ENCODE measurements at regions of chr11 and their contacts with region 1.

Region 1: DNA sequence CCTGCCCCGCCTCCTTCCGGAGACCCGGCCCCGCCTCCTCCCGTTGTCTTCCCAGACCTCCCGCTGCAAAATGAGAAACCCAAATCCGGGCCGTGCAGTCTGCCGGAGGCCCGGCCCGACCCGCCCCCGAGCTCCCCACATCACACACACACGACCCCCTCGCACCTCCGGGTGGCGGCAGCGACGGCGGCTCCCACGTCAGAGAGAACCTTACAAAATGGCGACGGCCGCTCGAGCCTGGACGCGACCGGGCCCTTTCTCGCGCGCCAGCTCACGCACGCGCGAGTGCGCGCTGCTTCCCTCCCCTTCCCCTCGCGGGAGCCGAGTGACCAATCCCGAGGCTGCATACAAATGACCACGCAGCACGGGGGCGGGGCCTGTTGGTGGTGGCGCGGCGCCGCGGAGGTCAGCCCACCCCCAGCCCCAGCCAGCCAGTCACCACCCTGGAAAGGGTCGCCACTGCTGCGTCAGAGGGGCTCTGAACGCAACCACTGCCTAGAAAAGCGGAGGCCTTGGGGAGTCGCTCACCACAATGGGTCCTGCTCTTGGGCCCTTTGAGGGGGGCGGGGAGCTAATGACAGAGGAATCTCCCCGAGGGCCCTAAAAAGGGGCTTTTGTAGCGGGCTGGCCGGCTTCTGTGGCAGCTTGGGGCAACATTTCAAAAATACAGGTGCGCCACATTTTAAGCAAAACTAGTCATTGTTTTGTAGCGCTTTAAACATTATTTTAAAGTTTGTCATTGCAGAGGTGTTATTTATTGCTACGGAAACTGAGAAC is at the start of gene RBM4B:
- DNase-seq: peak; percentile 97 to 98
- ATAC-seq: peak; percentile 98 to 99 (median 99)
- H3K4me3 ChIP-seq: peak within 1 kb of the TSS; percentile 52 to 94 (median 72)
- H3K27ac ChIP-seq: peak within 1 kb of the TSS; percentile 86 to 98 (median 92)
- H3K4me1 ChIP-seq: peaks cover 7 to 55% (median 38%) of the 10 kb centered on the region in 9 donors
- H3K27me3 ChIP-seq: no peaks in the 10 kb centered on the region
- CTCF ChIP-seq: no peak
- total RNA-seq, gene RBM4B: 5.7 to 12.6 (median 9.2) TPM

Region 2: DNA sequence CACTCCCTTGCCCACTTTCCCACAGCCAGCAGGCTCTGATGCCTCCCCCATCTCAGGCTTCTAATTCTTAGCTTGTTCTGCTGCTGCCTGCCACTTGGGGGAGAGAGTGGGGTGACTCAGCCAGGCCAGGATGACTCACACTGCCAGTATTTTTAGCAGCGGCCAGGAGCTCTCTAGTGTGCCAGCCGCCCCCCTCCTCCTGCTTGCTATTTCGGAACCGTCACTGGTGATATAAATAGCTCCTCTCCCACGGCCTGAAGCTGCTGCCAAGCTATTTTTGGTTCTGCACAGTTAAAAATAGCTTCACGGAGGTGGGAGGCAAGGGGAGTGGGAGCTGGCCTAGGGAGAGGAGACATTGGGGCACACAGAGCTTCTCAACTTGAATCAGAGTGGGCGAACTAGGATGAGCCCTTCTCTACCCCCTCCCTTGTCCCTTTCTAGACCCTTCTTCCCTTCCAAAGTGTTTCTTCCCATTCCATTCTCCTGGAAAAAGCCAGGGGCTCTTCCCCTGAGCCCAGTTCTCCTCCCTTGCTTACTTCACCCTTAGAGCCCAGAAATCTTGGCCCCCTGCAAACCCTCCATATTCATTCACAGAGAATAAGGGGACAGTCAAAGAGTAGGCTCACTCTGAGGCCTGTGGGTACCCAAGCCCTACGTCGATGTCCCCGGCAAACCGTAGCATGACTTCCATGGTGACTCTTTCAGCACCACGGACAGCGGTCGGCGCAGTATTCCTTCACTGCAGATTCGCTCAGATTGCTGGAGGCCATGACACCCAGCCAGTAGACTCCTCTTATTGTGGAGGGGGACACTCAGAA is 259.4 kb before region 1 on chr11:
- intact Hi-C with region 1: loop called in 3 of 10 experiments (anchors 5 to 10 kb)
- DNase-seq: peak; percentile 71 to 85
- ATAC-seq: peak; percentile 78 to 97 (median 93)
- H3K4me3 ChIP-seq: no peak overlapping the region
- H3K27ac ChIP-seq: peak overlapping the region in 2 of 10 donors; percentile 43 to 55
- H3K4me1 ChIP-seq: peaks cover 0 to 52% (median 30%) of the 10 kb centered on the region in 9 donors
- H3K27me3 ChIP-seq: peaks cover 0 to 46% (median 10%) of the 10 kb centered on the region in 7 donors
- CTCF ChIP-seq: peak in 7 of 9 donors; percentile 21 to 56 (median 38)

Region 3: GRCh38 chr11:66579017-66579606 is 98.7 kb before region 1 on chr11:
- intact Hi-C with region 1: loop called (anchors 1 to 5 kb)
- DNase-seq: peak; percentile 82 to 85
- ATAC-seq: peak; percentile 88 to 94 (median 92)
- H3K4me3 ChIP-seq: no peak overlapping the region
- H3K27ac ChIP-seq: no peak overlapping the region
- H3K4me1 ChIP-seq: peaks cover 0 to 8% (median 6%) of the 10 kb centered on the region in 9 donors
- H3K27me3 ChIP-seq: no peaks in the 10 kb centered on the region
- CTCF ChIP-seq: peak; percentile 70 to 88 (median 85)

Region 4: GRCh38 chr11:66592457-66593302 is 85.1 kb before region 1 on chr11 and contains the starts of genes CCDC87 and CCS:
- intact Hi-C with region 1: loop called in 1 of 10 experiments (anchors 5 kb)
- DNase-seq: peak; percentile 98 to 99
- ATAC-seq: peak; percentile 97 to 99 (median 98)
- H3K4me3 ChIP-seq: peak within 1 kb of the TSS; percentile 36 to 85 (median 66)
- H3K27ac ChIP-seq: peak within 1 kb of the TSS in 9 of 10 donors; percentile 68 to 93 (median 84)
- H3K4me1 ChIP-seq: peaks cover 3 to 43% (median 32%) of the 10 kb centered on the region in 9 donors
- H3K27me3 ChIP-seq: no peaks in the 10 kb centered on the region
- CTCF ChIP-seq: peak; percentile 37 to 91 (median 69)
- total RNA-seq, gene CCDC87: 0.17 to 0.66 (median 0.37) TPM
- total RNA-seq, gene CCS: 15.9 to 29.3 (median 20.2) TPM

Region 5: GRCh38 chr11:66616379-66617154 is 61.2 kb before region 1 on chr11 and contains the start of gene RBM14:
- intact Hi-C with region 1: loop called in 2 of 10 experiments (anchors 1 to 5 kb)
- DNase-seq: peak; percentile 99
- ATAC-seq: peak; percentile 94 to 98 (median 97)
- H3K4me3 ChIP-seq: peak within 1 kb of the TSS; percentile 56 to 94 (median 82)
- H3K27ac ChIP-seq: peak within 1 kb of the TSS; percentile 79 to 96 (median 94)
- H3K4me1 ChIP-seq: peaks cover 7 to 54% (median 46%) of the 10 kb centered on the region in 9 donors
- H3K27me3 ChIP-seq: no peaks in the 10 kb centered on the region
- CTCF ChIP-seq: no peak
- total RNA-seq, gene RBM14: 22.4 to 34.3 (median 28.3) TPM

Region 6: DNA sequence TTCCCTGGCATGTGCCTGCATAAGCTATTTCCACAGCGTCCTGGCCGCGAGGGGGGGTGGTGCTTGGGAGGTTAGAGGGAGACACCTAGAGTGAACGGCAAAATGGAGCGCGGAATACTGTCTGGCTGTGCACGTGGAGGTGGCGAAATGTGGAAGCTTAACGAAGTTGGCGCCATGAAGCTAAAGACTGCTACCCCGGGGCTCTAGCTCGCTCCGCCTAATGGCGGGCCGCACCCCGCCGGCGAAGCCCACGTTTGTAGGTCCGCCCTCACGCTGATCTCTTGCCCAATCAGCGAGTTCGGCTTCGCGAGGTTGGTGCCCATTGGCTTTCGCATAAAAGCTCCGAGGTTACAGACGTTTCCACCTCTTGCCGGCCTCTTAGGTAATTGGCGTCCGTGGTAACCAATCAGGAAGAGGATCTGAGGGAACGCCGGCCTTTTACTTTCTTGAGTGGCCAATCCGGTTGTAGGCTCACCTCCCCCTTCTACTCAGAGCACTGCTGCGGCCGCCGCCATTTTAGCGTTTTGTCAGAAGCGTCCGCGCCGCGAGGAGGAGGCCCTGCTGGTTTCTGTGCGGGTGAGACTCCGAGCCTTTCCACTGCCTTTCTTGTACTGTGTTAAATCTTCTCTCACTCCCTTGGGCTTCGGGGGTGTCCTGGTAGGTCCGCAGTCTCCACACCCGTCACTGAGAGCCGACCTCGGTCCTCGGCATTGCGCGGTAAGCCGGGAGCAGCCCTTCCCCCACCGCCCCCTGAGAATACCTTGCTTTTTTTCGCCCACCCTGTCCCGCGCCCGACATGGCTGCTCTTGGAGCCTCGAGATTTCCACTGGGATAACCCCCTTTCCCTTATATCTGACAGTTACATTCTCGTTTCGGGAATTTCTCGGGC is 39.4 kb before region 1 on chr11 and contains the start of gene RBM4:
- intact Hi-C with region 1: loop called in 4 of 10 experiments (anchors 5 kb)
- DNase-seq: peak; percentile 93 to 100
- ATAC-seq: peak; percentile 95 to 100 (median 98)
- H3K4me3 ChIP-seq: peak within 1 kb of the TSS; percentile 53 to 93 (median 78)
- H3K27ac ChIP-seq: peak within 1 kb of the TSS; percentile 64 to 94 (median 89)
- H3K4me1 ChIP-seq: peaks cover 14 to 68% (median 52%) of the 10 kb centered on the region in 9 donors
- H3K27me3 ChIP-seq: no peaks in the 10 kb centered on the region
- CTCF ChIP-seq: peak in 4 of 9 donors; percentile 3 to 44 (median 12)
- total RNA-seq, gene RBM4: 49.3 to 77.0 (median 55.3) TPM